ENCODE measurements at regions of chr7 and their contacts with region 1.

Region 1: GRCh38 chr7:124856299-124856888 is 73.2 kb downstream of the POT1 start:
- DNase-seq: no peak
- ATAC-seq: no peak
- H3K4me3 Mint-ChIP-seq: no peak overlapping the region
- H3K27ac Mint-ChIP-seq: no peak overlapping the region
- H3K4me1 Mint-ChIP-seq: no peaks in the 10 kb centered on the region
- H3K27me3 Mint-ChIP-seq: no peaks in the 10 kb centered on the region
- CTCF ChIP-seq: peak; percentile 42

Region 2: GRCh38 chr7:123494193-123494796 is 1362.1 kb before region 1 on chr7:
- CTCF ChIA-PET with region 1: no interaction called
- POLR2A ChIA-PET with region 1: no interaction called
- intact Hi-C with region 1: loop called (anchors 1 kb)
- DNase-seq: no peak
- ATAC-seq: peak; percentile 37
- H3K4me3 Mint-ChIP-seq: no peak overlapping the region
- H3K27ac Mint-ChIP-seq: no peak overlapping the region
- H3K4me1 Mint-ChIP-seq: peaks cover 2% of the 10 kb centered on the region
- H3K27me3 Mint-ChIP-seq: peaks cover 11% of the 10 kb centered on the region
- CTCF ChIP-seq: peak; percentile 90

Region 3: DNA sequence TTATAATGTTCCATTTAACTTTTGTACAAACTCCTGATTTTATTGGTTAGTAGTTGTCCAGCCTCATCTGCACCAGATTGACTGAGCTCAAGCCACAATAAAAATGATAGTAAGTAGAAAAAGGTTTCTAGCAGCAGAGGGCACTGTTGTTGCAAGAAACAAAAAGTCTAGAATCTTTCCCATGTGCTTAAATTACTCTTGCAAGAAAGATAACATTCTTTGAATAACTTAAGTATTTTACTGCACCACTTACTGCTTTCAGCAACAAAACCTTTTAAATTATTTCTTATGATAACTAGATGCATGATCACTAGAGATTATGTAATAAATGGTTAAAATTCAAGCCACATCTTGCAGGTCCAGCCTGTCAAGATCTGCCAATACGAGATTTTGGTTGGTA is 1173.7 kb before region 1 on chr7:
- CTCF ChIA-PET with region 1: no interaction called
- POLR2A ChIA-PET with region 1: no interaction called
- intact Hi-C with region 1: loop called (anchors 10 kb)
- DNase-seq: no peak
- ATAC-seq: no peak
- H3K4me3 Mint-ChIP-seq: no peak overlapping the region
- H3K27ac Mint-ChIP-seq: no peak overlapping the region
- H3K4me1 Mint-ChIP-seq: no peaks in the 10 kb centered on the region
- H3K27me3 Mint-ChIP-seq: no peaks in the 10 kb centered on the region
- CTCF ChIP-seq: no peak

Region 4: DNA sequence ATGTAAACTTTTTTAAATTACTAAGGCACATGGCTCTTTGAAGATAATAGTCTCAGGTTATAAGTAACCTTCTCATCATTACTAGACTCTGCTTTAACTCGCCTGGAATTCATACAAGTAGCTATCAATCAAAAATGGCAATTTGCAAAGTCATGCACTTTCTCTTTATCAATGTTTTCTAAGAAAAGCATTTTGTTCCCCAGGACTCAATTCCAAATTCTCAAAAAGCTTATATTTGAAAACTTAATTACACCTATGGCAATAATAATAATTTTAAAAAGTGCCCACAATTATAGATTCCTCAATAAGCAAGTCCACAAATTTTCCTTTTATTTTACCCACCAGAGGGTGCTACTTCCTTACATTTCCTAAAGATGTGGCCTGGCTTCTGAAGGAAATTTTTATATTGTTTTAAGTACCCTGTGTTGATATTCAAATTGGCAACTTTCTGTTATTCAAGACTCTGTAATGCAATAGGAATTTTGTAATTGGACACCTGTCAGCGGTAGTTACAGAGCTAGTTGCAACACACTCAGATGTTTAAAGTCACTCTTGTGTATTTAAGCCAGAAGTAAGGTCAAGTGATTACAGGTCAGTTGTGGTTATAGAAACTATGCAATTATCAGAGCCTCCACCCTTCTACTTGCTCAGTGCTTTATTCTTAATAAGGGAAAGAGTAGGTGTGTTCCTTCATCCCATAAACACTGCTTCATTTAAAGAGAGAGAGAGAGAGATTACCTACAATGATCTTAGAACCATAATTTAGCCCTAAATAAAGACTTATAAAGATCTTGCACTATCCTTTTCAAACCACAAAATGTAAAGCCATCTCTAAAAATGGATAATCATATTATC is 1058.5 kb before region 1 on chr7:
- CTCF ChIA-PET with region 1: no interaction called
- POLR2A ChIA-PET with region 1: no interaction called
- intact Hi-C with region 1: loop called (anchors 5 kb)
- DNase-seq: no peak
- ATAC-seq: no peak
- H3K4me3 Mint-ChIP-seq: no peak overlapping the region
- H3K27ac Mint-ChIP-seq: no peak overlapping the region
- H3K4me1 Mint-ChIP-seq: no peaks in the 10 kb centered on the region
- H3K27me3 Mint-ChIP-seq: no peaks in the 10 kb centered on the region
- CTCF ChIP-seq: no peak

Region 5: GRCh38 chr7:124152859-124153692 is 703.3 kb before region 1 on chr7:
- CTCF ChIA-PET with region 1: no interaction called
- POLR2A ChIA-PET with region 1: no interaction called
- intact Hi-C with region 1: loop called (anchors 5 kb)
- DNase-seq: no peak
- ATAC-seq: no peak
- H3K4me3 Mint-ChIP-seq: no peak overlapping the region
- H3K27ac Mint-ChIP-seq: no peak overlapping the region
- H3K4me1 Mint-ChIP-seq: no peaks in the 10 kb centered on the region
- H3K27me3 Mint-ChIP-seq: no peaks in the 10 kb centered on the region
- CTCF ChIP-seq: no peak

Measured in activated B cell treated with CpG ODN at 0.5 μM for 24 hours (primary cell).